ENCODE measurements at regions of chr2 and their contacts with region 1.

Region 1: DNA sequence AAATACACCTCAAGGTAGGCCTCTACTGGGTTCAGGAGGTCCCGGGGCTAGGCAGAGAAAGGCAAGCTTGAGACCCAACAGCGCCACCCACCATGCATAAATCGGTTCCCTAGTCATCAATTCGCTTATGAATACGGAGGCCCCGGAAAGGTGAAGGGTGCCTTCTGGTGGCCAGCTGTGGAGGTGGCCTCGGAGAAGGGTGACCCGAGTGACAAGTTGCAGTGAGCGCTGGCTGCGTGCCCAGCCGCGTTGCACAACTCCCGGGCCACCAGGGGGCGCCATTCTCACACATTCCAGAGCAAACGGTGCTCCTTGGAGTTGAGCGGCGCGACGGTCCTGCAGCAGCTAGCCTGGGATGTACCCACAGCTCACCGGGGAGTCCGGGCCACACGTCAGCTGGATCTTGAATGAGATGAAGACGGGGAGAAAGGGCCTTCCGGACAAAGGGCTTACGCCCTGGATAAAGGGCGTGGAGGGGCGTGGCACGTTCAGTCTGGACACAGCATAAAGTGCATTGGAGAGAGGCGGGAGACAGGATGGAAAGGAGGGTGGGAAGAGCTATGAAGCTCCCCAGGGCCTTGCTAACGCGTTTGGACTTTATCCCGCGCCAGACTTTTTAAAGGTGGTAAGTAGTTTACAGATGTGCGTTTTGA is 20.4 kb downstream of the TMSB10 start:
- DNase-seq: peak; percentile 36
- H3K4me3 ChIP-seq: peak overlapping the region; percentile 37
- H3K27me3 ChIP-seq: no peaks in the 10 kb centered on the region
- CTCF ChIP-seq: peak; percentile 94

Region 2: DNA sequence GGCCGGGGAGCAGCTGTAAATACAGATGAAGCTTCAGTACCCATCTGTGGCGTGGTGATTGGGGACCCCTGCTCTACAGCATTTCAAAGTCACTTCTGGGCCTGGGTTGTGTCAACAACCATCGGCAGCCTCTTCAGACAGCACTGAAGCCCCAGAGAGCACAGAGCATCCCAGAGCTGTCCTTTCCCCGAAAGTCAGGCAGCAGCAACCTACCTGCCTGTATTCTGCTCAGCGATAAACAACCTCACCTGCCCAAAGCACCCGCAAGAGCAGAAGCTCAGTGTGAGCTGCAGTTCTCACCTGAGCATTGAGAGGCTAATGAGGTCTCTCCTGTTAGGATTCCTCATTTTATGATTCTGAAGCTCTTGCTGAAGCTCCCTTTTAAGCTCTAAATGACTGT is 64.3 kb before region 1 on chr2:
- CTCF ChIA-PET with region 1: interaction called, 12 read pairs
- POLR2A ChIA-PET with region 1: no interaction called
- DNase-seq: no peak
- H3K4me3 ChIP-seq: no peak overlapping the region
- H3K27me3 ChIP-seq: no peaks in the 10 kb centered on the region
- CTCF ChIP-seq: no peak

Region 3: DNA sequence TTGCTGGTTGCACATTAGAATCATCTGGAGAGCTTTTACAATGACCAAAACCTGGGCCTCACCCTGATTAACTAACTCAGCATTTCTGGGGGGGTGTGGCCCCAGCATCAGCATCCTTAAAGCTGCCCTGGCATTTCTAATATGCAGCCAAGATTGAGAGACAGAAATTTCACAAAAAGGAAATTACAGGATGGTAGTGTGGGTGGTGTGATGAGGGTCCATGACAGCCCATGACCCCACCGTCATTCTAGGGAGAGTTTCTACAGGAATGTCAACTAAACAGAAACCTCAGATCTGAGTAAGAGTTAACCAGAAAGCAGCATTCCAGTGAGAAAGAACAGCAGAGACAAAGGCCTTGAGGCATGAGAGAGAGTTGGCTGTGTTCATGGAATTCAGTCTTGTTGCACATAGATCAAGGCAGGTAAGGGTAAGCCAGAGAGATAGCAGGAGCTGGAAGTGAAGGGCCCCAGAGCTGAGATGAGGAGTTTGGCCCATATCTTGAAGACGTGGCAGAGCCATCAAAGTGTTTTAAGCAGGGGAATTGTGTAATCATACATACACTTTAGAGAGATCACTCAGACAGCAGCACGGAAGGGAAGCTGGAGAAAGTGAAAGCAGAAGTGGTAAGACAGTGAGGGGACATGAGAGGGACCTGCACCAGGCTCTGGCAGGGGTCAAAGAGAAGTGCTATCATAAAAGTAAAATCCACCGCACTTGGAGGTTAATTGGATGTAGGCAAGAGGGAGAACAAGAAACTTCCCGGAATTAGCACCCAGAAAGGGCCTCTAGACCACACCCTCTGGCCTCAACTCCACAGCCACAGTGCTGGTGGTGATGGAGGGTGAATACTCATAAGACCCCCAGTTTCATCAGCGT is 37.2 kb before region 1 on chr2:
- CTCF ChIA-PET with region 1: interaction called, 18 read pairs
- POLR2A ChIA-PET with region 1: no interaction called
- DNase-seq: no peak
- H3K4me3 ChIP-seq: no peak overlapping the region
- H3K27me3 ChIP-seq: no peaks in the 10 kb centered on the region
- CTCF ChIP-seq: no peak

Region 4: DNA sequence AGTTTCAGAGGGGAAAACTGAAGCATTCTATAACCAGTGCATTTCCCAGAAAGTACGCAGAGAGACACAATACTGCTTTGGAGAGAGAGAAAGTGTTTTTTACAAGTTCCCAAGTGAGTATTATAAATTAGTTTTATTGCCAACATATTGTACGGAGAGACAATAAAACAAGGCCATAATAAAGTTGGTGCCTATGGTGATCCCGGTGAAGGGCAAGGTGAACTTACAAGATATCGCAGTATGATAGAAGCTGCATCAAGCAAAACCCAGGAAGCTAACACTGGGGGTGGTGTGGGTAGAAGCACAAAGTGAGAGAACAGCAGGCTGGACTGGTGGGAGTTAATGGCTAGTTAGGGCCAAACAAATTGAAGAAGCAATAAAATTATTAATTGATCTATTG is 12.9 kb before region 1 on chr2:
- CTCF ChIA-PET with region 1: interaction called, 30 read pairs
- POLR2A ChIA-PET with region 1: no interaction called
- DNase-seq: no peak
- H3K4me3 ChIP-seq: no peak overlapping the region
- H3K27me3 ChIP-seq: no peaks in the 10 kb centered on the region
- CTCF ChIP-seq: no peak

Region 5: DNA sequence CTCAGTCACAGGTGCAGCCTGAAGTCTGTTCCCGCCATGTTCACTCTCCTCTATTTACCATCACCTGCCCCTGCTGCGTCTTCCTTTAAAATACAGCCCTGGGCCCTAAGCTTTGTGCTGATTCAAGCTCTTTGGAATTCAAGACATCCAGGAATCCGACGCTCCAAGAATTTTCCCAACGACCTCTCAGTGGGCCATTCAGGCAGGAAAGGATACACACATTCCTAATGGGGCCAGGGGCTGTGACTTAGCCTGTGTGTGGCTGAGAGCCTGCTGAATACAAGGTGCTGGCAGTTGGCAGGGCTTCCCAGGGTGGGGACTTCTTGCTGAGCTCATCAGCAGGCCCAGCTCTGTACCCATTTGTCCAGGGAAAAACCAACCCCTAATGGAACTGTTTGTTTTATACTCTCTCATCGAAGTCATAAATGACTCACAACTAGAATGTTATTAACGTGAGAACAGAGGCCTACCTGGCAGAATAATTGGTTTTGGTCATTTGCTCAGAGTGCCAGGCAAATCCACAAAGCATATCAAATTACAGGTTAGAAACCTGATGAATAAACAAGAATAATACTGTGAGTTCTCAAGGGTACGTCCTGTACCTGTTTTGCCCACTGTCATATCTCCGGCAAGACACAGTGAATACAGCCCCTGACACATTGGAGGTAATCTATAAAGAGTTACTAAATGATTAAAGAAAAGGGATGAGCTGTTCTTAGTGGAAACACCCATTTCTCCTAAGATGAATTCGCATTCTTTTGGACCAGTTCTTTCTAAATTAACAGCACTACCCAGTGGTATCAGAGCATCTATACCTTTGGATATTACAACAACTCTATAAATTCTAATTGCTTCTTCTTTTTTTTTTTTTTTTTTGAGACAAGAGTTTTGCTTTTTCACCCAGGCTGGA is 32.5 kb after region 1 on chr2:
- CTCF ChIA-PET with region 1: interaction called, 12 read pairs
- POLR2A ChIA-PET with region 1: interaction called, 3 read pairs
- DNase-seq: peak; percentile 93
- H3K4me3 ChIP-seq: no peak overlapping the region
- H3K27me3 ChIP-seq: no peaks in the 10 kb centered on the region
- CTCF ChIP-seq: no peak

Region 6: DNA sequence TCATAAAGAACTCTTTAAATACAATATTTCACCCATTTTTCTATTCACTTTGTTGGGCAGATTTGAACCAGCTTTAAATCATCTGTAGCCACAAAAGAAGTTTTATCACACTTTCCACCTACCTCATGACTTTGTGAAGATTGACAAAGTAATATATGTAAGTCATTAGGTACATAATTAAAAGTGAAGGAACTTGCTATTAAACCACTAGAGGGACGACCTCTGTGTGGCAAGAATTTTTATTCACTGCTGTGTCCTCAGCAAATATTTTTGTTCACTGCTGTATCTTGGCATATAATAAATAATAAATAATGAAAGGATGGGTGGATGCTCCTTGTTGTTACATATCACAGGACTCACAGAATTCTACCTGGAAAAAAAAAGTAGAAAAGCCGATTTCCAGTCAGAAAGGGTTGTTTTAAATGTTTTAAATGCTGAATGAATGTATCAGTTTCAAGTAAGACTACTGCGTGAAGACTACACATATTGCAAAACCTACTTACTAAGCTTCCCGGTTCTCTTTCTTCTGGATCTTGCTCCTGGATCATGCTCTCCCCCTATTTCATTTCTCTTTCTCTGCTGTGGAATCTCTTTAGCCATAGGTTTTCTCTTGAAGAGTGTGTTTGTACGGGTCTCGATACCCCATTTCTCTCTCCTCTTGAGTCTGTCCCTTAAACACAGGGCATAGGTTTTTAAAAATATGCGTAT is 90.0 kb after region 1 on chr2:
- CTCF ChIA-PET with region 1: interaction called, 17 read pairs
- POLR2A ChIA-PET with region 1: no interaction called
- DNase-seq: no peak
- H3K4me3 ChIP-seq: no peak overlapping the region
- H3K27me3 ChIP-seq: no peaks in the 10 kb centered on the region
- CTCF ChIP-seq: no peak; the same call in 1 of the 2 replicates

Region 7: GRCh38 chr2:85215448-85216401 is 289.9 kb after region 1 on chr2:
- CTCF ChIA-PET with region 1: no interaction called
- POLR2A ChIA-PET with region 1: no interaction called
- DNase-seq: peak; percentile 80
- H3K4me3 ChIP-seq: no peak overlapping the region
- H3K27me3 ChIP-seq: 0 out of 2 replicates have a peak, but pooled peaks cover 2% of the 10 kb centered on the region
- CTCF ChIP-seq: no peak